Activated T-helper 1 cell treated with anti-CD3 and anti-CD28 coated beads, Interleukin-12 subunit alpha, Interleukin-12 subunit beta, Interleukin-2, Interleukin-4 antibody, amounts not matched to agents 30 ng/mL and 10 ng/mL and 1 ng/mL, durations not matched to agents 14 hours and 24 hours and 36 hours (primary cell): ENCODE measurements at regions of chr3 and their contacts with region 1.

Region 1: GRCh38 chr3:115783938-115784738 is 160.8 kb downstream of the GAP43 start:
- DNase-seq: peak; percentile 76
- H3K4me3 Mint-ChIP-seq: peak overlapping the region; percentile 83
- H3K27ac Mint-ChIP-seq: peak overlapping the region; percentile 95
- H3K4me1 Mint-ChIP-seq: peaks cover 12% of the 10 kb centered on the region
- H3K27me3 Mint-ChIP-seq: peaks cover 8% of the 10 kb centered on the region

Region 2: DNA sequence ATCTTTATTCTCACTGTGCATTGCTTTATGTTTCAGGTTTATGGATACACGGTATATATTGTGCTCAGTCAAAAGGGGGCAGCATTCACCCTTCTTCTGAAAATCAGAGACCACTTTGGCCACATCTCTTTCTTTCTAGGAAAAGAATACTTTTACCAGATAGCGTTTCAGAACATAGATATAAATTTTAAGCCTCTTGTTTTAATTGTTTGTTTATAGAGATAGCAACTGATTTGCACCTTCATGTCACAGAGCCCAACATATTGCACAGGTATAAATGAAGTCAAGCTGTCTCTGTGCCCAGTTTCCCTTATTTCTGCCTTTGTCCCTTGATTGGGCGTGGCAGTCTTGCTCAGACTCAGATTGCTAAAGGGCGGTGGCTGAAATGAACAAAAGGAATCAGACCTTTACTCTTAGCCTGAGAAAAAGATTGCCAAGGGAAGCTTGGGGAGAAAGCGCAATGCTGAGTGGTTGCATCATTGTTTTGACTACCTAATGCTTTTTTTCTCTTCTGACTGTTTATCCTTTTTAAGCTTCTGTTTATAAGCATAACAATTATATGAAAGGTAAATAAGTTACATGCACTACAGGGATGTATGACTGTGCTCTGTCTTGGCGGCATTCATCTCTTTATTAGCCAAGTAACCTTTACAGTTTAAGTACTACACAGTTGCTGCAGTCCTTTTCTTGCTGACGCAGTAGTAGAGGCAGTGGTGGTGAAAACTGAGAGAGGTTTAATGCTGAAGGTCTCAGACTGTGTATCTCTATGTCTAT is 566.3 kb before region 1 on chr3:
- intact Hi-C with region 1: loop called (anchors 1 kb)
- DNase-seq: no peak
- H3K4me3 Mint-ChIP-seq: no peak overlapping the region
- H3K27ac Mint-ChIP-seq: no peak overlapping the region
- H3K4me1 Mint-ChIP-seq: no peaks in the 10 kb centered on the region
- H3K27me3 Mint-ChIP-seq: peaks cover 3% of the 10 kb centered on the region

Region 3: DNA sequence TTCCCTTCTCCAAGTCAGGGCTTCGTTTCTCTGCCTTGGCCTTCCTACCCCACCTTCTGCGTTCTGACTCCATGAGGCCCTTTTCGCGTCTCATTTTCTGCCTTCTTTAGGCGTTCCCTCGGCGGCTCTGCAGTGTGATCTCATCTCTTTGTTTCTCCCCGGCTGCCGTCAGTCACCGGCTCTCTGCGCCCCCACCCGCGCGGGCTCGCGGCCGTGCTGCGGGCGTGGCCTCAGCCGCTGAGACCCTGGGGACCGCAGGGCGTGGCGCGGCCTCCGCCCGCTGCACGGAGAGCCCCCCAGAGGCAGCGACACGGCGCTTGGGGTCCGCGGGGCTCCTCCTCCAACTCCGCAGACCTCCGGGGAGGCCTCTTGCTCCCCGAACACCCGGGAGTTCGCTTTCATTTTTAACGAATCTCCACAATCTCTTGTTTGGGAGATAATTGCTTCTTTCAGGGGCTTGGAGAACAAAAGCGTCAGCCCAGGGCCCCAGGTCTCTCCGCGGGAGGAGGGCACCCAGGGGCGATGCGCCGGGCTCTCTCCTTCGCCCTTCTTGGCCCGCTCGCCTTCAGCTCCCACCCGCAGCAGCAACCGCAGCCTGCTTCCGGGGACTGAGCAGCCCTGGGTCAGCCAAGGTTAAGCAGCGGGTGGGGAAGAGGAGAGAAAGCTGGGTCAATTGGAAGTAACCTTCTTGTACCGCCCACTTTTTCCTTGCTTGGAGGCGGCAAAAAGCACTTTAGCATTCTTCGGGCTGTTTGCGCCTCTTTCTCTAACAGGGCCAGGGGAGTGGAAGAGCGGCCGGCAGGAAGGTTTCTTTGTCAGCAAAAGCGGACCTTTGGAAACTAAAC is 125.6 kb before region 1 on chr3:
- intact Hi-C with region 1: loop called (anchors 2 kb)
- DNase-seq: peak; percentile 69
- H3K4me3 Mint-ChIP-seq: peak overlapping the region; percentile 86
- H3K27ac Mint-ChIP-seq: peak overlapping the region; percentile 90
- H3K4me1 Mint-ChIP-seq: peaks cover 32% of the 10 kb centered on the region
- H3K27me3 Mint-ChIP-seq: peaks cover 9% of the 10 kb centered on the region

Region 4: DNA sequence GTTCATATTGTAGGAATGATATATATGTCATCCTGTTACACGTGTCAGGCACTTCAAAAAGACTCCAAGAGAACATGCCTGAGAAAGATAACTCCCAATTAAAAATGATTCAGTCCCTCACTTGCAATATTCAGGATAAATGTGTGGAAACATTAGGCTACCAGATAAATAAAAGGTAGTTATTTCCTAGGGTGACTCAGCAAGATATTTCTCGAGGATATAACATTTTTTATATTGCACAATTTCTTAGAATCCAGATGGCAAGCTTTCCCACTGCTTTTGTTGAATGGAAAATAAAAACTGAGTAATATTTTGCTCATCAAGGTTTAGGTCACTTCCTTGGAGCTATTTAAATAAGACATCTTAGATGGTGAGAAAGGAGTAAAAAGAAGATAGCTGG is 20.6 kb after region 1 on chr3:
- intact Hi-C with region 1: no loop called
- DNase-seq: no peak
- H3K4me3 Mint-ChIP-seq: no peak overlapping the region
- H3K27ac Mint-ChIP-seq: no peak overlapping the region
- H3K4me1 Mint-ChIP-seq: no peaks in the 10 kb centered on the region
- H3K27me3 Mint-ChIP-seq: peaks cover 17% of the 10 kb centered on the region

Region 5: GRCh38 chr3:115814778-115815380 is 30.7 kb after region 1 on chr3:
- intact Hi-C with region 1: loop called (anchors 1 kb)
- DNase-seq: peak; percentile 33
- H3K4me3 Mint-ChIP-seq: no peak overlapping the region
- H3K27ac Mint-ChIP-seq: no peak overlapping the region
- H3K4me1 Mint-ChIP-seq: peaks cover 4% of the 10 kb centered on the region
- H3K27me3 Mint-ChIP-seq: peaks cover 6% of the 10 kb centered on the region

Region 6: GRCh38 chr3:115833074-115833473 is 48.9 kb after region 1 on chr3:
- intact Hi-C with region 1: no loop called
- DNase-seq: no peak
- H3K4me3 Mint-ChIP-seq: no peak overlapping the region
- H3K27ac Mint-ChIP-seq: no peak overlapping the region
- H3K4me1 Mint-ChIP-seq: no peaks in the 10 kb centered on the region
- H3K27me3 Mint-ChIP-seq: peaks cover 17% of the 10 kb centered on the region

Region 7: DNA sequence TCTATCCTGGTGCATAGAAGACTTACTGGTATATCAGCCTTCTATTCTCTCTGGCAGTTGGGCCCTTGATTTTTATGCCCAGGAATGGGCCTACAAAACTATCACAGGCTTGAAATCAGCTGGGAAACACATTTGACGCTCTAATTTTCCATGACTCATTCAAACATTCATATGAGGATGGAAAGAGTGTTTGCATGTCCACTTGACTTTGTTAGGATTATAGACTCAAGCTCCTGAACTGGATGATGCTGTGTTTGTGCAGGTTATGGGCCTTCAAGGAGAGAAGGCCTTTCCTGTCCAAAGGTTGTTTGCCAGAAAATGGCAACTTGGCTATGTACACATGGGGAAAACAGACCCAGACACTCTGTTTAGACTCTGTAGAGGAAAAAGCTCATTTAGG is 59.1 kb after region 1 on chr3:
- intact Hi-C with region 1: no loop called
- DNase-seq: no peak
- H3K4me3 Mint-ChIP-seq: no peak overlapping the region
- H3K27ac Mint-ChIP-seq: no peak overlapping the region
- H3K4me1 Mint-ChIP-seq: no peaks in the 10 kb centered on the region
- H3K27me3 Mint-ChIP-seq: peaks cover 2% of the 10 kb centered on the region